OCI-LY7 (cell line): ENCODE measurements at regions of chr2 and their contacts with region 1.

Region 1: GRCh38 chr2:16656784-16657391 is 8.7 kb downstream of the CYRIA start:
- DNase-seq: peak; percentile 79
- H3K4me3 ChIP-seq: peak overlapping the region; percentile 48
- H3K27ac ChIP-seq: peak overlapping the region; percentile 87
- H3K4me1 ChIP-seq: peaks cover 95% of the 10 kb centered on the region
- CTCF ChIP-seq: no peak

Region 2: DNA sequence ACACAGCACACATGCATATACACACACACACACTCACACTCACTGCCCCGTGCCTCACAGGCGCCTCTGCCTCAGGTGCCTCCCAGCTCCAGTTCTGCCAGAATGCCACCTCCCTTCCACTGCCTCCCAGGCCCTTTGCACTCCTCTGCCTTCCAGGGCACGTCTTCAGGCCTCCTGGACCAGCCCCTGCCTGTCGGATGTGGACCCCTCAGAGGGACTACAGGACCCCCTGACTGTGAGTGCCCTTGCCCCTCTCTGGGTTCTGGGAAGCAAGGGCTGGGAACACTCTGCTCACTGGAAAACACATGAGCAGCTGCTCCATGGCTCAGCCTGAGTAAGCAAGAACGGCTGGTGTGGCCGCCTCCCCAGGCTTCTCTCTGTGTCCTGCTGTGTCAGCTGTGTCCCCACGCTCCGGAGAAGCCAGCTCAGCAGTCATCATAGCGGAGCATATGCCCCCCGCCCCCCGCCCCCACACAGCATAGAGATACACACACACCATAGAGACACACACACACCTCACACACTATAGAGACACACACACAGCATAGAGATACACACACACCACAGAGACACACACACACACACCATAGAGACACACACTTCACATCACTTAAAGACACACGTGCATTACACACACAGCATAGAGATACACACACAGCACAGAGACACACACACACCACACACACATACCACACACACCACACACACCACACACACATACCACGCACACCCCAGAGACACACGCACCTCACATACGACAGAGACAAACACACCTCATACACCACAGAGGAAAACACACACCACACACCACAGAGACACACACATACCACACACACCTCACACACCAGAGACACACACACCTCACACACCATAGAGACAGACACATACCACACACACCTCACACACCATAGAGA is 262.6 kb before region 1 on chr2:
- CTCF ChIA-PET with region 1: interaction called, 16 read pairs
- POLR2A ChIA-PET with region 1: no interaction called
- intact Hi-C with region 1: no loop called
- DNase-seq: no peak
- H3K4me3 ChIP-seq: no peak overlapping the region
- H3K27ac ChIP-seq: no peak overlapping the region
- H3K4me1 ChIP-seq: no peaks in the 10 kb centered on the region
- CTCF ChIP-seq: no peak

Region 3: GRCh38 chr2:16630463-16630862 is 26.4 kb before region 1 on chr2:
- CTCF ChIA-PET with region 1: interaction called, 149 read pairs
- POLR2A ChIA-PET with region 1: interaction called, 414 read pairs
- intact Hi-C with region 1: loop called (anchors 1 kb)
- DNase-seq: peak; percentile 66
- H3K4me3 ChIP-seq: peak overlapping the region; percentile 3
- H3K27ac ChIP-seq: peak overlapping the region; percentile 97
- H3K4me1 ChIP-seq: peaks cover 77% of the 10 kb centered on the region
- CTCF ChIP-seq: no peak; the same call in 1 of the 2 replicates

Region 4: GRCh38 chr2:16644221-16644925 is 12.5 kb before region 1 on chr2:
- CTCF ChIA-PET with region 1: interaction called, 3 read pairs
- POLR2A ChIA-PET with region 1: interaction called, 11 read pairs
- intact Hi-C with region 1: no loop called
- DNase-seq: no peak
- H3K4me3 ChIP-seq: no peak overlapping the region
- H3K27ac ChIP-seq: no peak overlapping the region
- H3K4me1 ChIP-seq: peaks cover 27% of the 10 kb centered on the region
- CTCF ChIP-seq: no peak

Region 5: GRCh38 chr2:16678964-16679363 is 22.1 kb after region 1 on chr2:
- CTCF ChIA-PET with region 1: no interaction called
- POLR2A ChIA-PET with region 1: interaction called, 15 read pairs
- intact Hi-C with region 1: no loop called
- DNase-seq: no peak
- H3K4me3 ChIP-seq: no peak overlapping the region
- H3K27ac ChIP-seq: no peak overlapping the region
- H3K4me1 ChIP-seq: peaks cover 31% of the 10 kb centered on the region
- CTCF ChIP-seq: no peak

Region 6: GRCh38 chr2:16713011-16713423 is 56.1 kb after region 1 on chr2:
- CTCF ChIA-PET with region 1: no interaction called
- POLR2A ChIA-PET with region 1: interaction called, 5 read pairs
- intact Hi-C with region 1: loop called (anchors 2 kb)
- DNase-seq: peak; percentile 53
- H3K4me3 ChIP-seq: peak overlapping the region; percentile 40
- H3K27ac ChIP-seq: peak overlapping the region; percentile 14
- H3K4me1 ChIP-seq: peaks cover 30% of the 10 kb centered on the region
- CTCF ChIP-seq: no peak

Region 7: DNA sequence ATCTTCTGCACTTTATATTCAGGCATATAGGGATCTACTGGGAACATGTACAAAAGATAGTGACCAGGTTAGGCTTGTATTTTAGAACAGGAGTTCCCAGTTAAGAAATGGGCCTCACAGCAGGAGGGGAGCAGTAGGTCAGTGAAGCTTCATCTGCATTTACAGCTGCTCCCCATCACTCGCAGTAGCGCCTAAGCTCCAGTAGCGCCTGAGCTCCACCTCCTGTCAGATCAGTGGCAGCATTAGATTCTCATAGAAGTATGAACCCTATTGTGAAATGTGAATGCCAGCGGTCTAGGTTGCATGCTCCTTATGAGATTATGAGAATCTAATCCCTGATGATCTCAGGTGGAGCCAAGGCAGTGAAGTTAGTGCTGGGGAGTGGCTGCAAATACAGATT is 233.2 kb after region 1 on chr2:
- CTCF ChIA-PET with region 1: no interaction called
- POLR2A ChIA-PET with region 1: no interaction called
- intact Hi-C with region 1: no loop called
- DNase-seq: no peak
- H3K4me3 ChIP-seq: no peak overlapping the region
- H3K27ac ChIP-seq: no peak overlapping the region
- H3K4me1 ChIP-seq: no peaks in the 10 kb centered on the region
- CTCF ChIP-seq: no peak

Region 8: GRCh38 chr2:17753803-17754663 is 1097.1 kb after region 1 on chr2 and contains the starts of genes GEN1 and SMC6:
- CTCF ChIA-PET with region 1: no interaction called
- POLR2A ChIA-PET with region 1: interaction called, 5 read pairs
- intact Hi-C with region 1: loop called (anchors 10 kb)
- DNase-seq: peak; percentile 97
- H3K4me3 ChIP-seq: peak within 1 kb of the TSS; percentile 98
- H3K27ac ChIP-seq: peak within 1 kb of the TSS; percentile 89
- H3K4me1 ChIP-seq: peaks cover 52% of the 10 kb centered on the region
- CTCF ChIP-seq: no peak
- total RNA-seq, gene GEN1: 37.6 and 52.5 TPM in 2 replicates
- total RNA-seq, gene SMC6: 37.0 and 48.9 TPM in 2 replicates